HEK293 (cell line): ENCODE measurements at regions of chr1 and their contacts with region 1.

Region 1: GRCh38 chr1:11037740-11038182 is 9.3 kb downstream of the MASP2 start:
- H3K4me3 ChIP-seq: no peak overlapping the region
- H3K27ac ChIP-seq: no peak overlapping the region
- H3K4me1 ChIP-seq: no peaks in the 10 kb centered on the region
- CTCF ChIP-seq: peak; percentile 94

Region 2: GRCh38 chr1:11027316-11027715 is 10.4 kb before region 1 on chr1:
- CTCF ChIA-PET with region 1: interaction called, 14 read pairs
- POLR2A ChIA-PET with region 1: interaction called, 4 read pairs
- H3K4me3 ChIP-seq: no peak overlapping the region
- H3K27ac ChIP-seq: no peak overlapping the region
- H3K4me1 ChIP-seq: no peaks in the 10 kb centered on the region
- CTCF ChIP-seq: no peak

Region 3: DNA sequence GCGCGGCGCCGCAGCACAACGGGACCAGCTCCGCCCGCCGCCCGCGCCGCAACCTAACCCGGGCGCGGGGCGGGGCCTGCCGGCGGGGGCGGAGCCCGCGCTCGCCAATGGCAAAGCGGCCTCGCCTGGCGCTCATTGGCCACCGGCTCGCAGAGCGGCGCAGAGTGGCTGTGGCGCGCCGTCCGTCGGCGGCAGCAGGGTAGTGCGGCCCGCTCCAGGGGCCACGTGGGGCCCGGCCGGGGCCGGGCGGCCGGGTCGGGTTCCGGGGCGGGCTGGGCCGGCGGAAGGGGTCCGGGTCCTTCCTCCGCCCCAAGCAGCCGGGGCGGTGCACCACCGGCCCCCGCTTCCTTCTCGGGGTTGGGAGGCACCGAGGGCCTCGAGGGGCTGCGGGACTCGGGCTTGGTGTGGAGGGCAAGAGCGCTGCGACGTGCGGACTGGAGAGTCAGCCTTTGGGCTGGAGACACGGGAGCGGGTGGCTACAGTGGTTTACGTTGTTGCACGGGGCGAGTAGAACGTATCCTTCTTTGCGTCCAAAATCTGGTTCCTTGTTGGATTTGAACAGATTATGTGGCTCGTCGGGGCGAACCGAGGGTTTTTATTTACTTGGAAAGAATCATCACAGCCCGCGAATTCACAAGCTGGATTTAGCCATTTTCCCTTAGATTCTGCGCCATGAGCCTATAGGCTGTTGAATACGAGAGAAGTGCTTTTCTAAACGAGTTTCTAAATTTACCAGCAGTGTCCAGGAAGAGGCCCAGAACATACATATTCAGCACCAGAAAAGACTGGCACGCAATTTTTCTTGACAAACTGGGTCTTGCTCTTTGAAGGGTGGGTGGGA is 22.4 kb after region 1 on chr1 and contains the start of gene SRM:
- CTCF ChIA-PET with region 1: interaction called, 43 read pairs
- POLR2A ChIA-PET with region 1: interaction called, 9 read pairs
- H3K4me3 ChIP-seq: peak within 1 kb of the TSS; percentile 87
- H3K27ac ChIP-seq: peak within 1 kb of the TSS; percentile 94
- H3K4me1 ChIP-seq: no peaks in the 10 kb centered on the region
- CTCF ChIP-seq: no peak

Region 4: DNA sequence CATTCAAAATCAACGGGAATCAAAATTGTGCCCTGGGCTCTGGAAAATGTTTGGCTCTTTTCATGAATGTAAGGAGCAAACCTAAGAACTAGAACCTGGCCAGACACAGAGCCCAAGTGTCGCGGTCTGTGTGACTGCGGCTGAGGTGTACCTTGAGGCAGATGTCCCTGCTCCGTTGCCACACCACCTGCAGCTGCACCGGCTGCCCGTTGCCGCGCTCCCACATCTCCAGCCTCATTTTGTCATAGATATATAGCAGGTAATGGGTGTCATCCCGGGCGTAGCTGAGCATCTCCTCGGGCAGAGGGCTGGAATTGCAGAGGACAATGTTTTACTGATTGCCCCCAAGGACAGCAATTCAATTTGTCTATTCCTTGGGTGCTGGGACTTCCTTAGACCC is 43.2 kb after region 1 on chr1:
- CTCF ChIA-PET with region 1: interaction called, 14 read pairs
- POLR2A ChIA-PET with region 1: no interaction called
- H3K4me3 ChIP-seq: no peak overlapping the region
- H3K27ac ChIP-seq: no peak overlapping the region
- H3K4me1 ChIP-seq: no peaks in the 10 kb centered on the region
- CTCF ChIP-seq: no peak

Region 5: DNA sequence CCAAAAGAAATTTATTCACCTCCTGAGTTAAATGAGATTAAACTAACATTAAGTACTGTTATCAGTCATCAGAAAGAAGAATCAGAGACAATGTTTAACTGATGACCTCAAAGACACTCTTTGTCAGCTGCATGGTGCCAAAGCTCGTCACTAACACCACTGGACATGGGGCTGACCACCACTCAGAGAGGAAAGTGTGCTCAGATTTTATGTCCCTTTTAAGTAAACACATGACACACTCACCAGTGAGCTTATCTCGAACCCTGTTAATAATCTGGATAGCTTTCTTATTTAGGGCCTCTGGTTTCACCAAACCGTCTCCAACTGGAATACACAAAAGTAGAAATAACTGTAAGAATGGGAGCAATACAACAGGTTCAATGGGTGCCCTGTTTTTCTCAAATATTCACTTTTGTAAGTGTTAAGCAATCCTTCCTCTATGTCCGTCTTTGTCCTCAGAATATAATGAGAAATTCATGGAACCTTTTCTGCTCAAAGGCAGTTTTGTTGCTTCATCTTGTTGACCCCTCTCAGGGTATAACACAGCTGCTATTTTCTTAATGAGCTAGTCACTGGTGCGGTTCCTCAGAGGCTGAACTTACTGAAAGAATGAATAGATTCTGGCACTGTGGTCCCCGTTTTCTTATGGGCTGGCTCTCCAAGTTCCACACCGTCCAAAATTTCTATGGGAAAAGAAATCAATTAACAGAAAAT is 71.4 kb after region 1 on chr1:
- CTCF ChIA-PET with region 1: interaction called, 14 read pairs
- POLR2A ChIA-PET with region 1: no interaction called
- H3K4me3 ChIP-seq: no peak overlapping the region
- H3K27ac ChIP-seq: no peak overlapping the region
- H3K4me1 ChIP-seq: no peaks in the 10 kb centered on the region
- CTCF ChIP-seq: no peak

Region 6: GRCh38 chr1:11214698-11215380 is 177.1 kb after region 1 on chr1:
- CTCF ChIA-PET with region 1: interaction called, 10 read pairs
- POLR2A ChIA-PET with region 1: no interaction called
- H3K4me3 ChIP-seq: no peak overlapping the region
- H3K27ac ChIP-seq: no peak overlapping the region
- H3K4me1 ChIP-seq: no peaks in the 10 kb centered on the region
- CTCF ChIP-seq: no peak

Region 7: DNA sequence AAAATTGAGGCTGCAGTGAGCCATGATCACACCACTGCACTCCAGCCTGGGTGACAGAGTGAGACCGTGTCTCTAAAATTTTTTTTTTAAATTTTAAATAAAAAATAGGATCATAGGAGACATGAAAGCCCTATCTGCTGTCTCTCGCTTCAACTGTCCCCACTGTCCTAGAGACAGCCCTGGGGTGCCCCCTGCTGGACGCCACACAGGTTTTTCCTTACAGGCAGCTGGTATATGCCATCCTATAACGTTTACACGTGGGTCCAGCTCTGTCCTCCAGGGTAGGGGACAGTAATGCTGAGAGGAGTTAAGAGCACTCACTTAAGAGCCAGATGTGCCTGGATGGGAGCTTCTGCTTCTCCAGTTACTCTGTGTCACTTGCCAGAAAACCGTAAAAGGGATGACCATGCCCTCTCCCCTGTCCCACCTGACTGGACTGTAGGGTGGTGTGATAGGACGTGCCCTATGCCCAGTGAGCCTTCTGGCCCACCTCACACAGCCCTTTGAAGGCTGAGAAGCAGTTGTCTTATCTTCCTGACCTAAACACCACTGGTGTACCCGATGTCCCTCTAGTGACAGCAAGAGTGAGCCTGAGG is 608.0 kb after region 1 on chr1:
- CTCF ChIA-PET with region 1: interaction called, 95 read pairs
- POLR2A ChIA-PET with region 1: no interaction called
- H3K4me3 ChIP-seq: no peak overlapping the region
- H3K27ac ChIP-seq: no peak overlapping the region
- H3K4me1 ChIP-seq: no peaks in the 10 kb centered on the region
- CTCF ChIP-seq: peak; percentile 57